Activated CD4-positive, alpha-beta T cell treated with anti-CD3 and anti-CD28 coated beads for 36 hours (primary cell): ENCODE measurements at regions of chr9 and their contacts with region 1.

Region 1: GRCh38 chr9:84823421-84824271 is 154.1 kb downstream of the NTRK2 start:
- DNase-seq: no peak
- ATAC-seq: no peak
- H3K4me3 Mint-ChIP-seq: no peak overlapping the region
- H3K27ac Mint-ChIP-seq: no peak overlapping the region
- H3K4me1 Mint-ChIP-seq: no peaks in the 10 kb centered on the region
- H3K27me3 Mint-ChIP-seq: peaks cover 2% of the 10 kb centered on the region

Region 2: GRCh38 chr9:84642553-84643141 is 181.0 kb before region 1 on chr9:
- CTCF ChIA-PET with region 1: no interaction called
- POLR2A ChIA-PET with region 1: interaction called, 11 read pairs
- intact Hi-C with region 1: no loop called
- DNase-seq: no peak
- ATAC-seq: no peak
- H3K4me3 Mint-ChIP-seq: no peak overlapping the region
- H3K27ac Mint-ChIP-seq: no peak overlapping the region
- H3K4me1 Mint-ChIP-seq: no peaks in the 10 kb centered on the region
- H3K27me3 Mint-ChIP-seq: no peaks in the 10 kb centered on the region